ENCODE measurements at regions of chr20 and their contacts with region 1.

Region 1: GRCh38 chr20:36605399-36606157 is at the start of gene RAB5IF:
- DNase-seq: peak; percentile 99
- H3K4me3 ChIP-seq: peak within 1 kb of the TSS; percentile 70 to 100 (median 86)
- H3K27ac ChIP-seq: peak within 1 kb of the TSS; percentile 87 to 96 (median 90)
- H3K4me1 ChIP-seq: peaks cover 0 to 29% (median 25%) of the 10 kb centered on the region in 4 donors
- H3K27me3 ChIP-seq: no peaks in the 10 kb centered on the region
- CTCF ChIP-seq: peak; percentile 76 to 98 (median 94)
- EP300 ChIP-seq: peak in 2 of 4 donors; percentile 33 to 86
- POLR2A ChIP-seq: peak; percentile 18 to 25
- total RNA-seq, gene RAB5IF: 58.7 to 85.1 (median 75.7) TPM

Region 2: DNA sequence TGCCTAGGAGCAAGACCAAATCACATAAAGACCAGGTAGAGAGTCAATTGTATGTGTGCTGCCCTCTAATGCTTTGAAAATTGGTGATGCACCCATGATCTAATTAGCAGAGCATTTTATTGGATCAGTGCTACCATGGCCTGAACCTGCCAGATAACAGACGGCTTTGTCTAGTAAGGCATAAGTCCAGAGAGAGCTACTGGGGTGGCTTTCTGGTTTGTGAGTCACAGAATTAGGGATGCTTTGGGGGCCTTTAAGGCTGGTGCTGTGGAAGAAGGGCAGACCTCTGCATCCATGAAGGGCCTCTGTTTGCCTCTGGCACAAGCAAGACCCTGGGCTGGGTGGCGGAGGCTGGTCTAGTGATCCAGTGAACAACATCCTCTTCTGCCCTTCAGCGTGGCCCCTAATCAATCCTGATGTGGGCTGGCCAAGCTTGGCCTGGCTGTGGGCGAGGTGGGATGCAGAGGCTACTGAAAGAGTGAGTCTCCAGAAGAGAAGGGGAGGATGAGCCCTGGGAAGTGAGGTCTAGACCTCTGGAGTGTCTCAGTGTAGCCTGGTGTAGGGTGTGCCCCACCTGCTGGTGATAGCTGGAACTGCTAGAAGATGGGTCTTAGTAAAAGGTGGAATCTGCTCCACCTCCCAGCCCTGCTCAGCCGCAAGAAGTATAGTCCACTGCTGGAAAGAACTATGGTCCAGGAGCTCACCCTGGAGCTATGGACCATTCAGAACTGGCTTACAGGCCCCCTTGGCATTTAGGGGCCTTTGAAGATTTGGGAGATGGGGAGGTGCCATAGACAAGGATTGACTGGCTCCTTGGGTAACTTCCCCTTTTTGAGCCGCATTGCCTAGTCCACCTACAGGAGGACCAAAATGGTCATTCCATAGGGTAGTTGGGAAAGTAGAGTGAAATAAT is 406.0 kb before region 1 on chr20:
- intact Hi-C with region 1: loop called (anchors 10 kb)
- DNase-seq: peak; percentile 87
- H3K4me3 ChIP-seq: no peak overlapping the region
- H3K27ac ChIP-seq: no peak overlapping the region
- H3K4me1 ChIP-seq: no peaks in the 10 kb centered on the region
- H3K27me3 ChIP-seq: no peaks in the 10 kb centered on the region
- CTCF ChIP-seq: peak; percentile 68 to 92 (median 86)
- EP300 ChIP-seq: no peak
- POLR2A ChIP-seq: no peak

Region 3: GRCh38 chr20:36550797-36551299 is 54.7 kb before region 1 on chr20:
- intact Hi-C with region 1: loop called (anchors 1 kb)
- DNase-seq: peak; percentile 87
- H3K4me3 ChIP-seq: no peak overlapping the region
- H3K27ac ChIP-seq: peak overlapping the region; percentile 70 to 100 (median 99)
- H3K4me1 ChIP-seq: peaks cover 2 to 49% (median 28%) of the 10 kb centered on the region in 4 donors
- H3K27me3 ChIP-seq: no peaks in the 10 kb centered on the region
- CTCF ChIP-seq: no peak
- EP300 ChIP-seq: no peak
- POLR2A ChIP-seq: no peak

Region 4: DNA sequence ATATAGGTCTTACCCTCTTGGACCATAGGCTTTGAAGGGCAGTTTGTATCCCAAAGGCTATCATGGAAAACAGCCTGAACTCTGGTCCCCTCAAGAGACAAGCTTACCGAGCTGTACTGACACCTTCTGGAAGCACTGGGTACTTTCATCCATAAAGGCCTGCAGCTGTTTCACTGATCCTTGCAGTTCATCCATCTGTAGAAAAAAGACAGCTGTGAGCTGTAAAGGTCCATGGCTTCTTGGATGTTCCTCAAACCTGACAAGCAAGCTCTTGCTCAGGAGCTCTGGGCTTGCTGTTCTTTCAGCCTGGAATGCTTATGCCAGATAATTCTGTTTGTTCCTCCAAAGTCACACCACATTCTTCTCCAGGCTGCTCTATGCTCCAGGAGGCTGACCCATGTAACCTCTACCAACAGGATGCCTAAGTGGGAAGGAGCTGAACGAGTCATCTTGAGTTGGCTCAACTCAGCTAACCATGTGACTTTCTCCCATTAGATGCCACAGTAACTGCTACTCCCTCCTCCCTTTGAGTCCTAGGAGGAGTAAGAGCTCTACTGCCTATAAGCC is 149.2 kb after region 1 on chr20:
- intact Hi-C with region 1: loop called (anchors 5 kb)
- DNase-seq: peak; percentile 84
- H3K4me3 ChIP-seq: no peak overlapping the region
- H3K27ac ChIP-seq: peak overlapping the region; percentile 7 to 75 (median 64)
- H3K4me1 ChIP-seq: peaks cover 0 to 35% (median 13%) of the 10 kb centered on the region in 4 donors
- H3K27me3 ChIP-seq: no peaks in the 10 kb centered on the region
- CTCF ChIP-seq: peak; percentile 69 to 82 (median 79)
- EP300 ChIP-seq: no peak
- POLR2A ChIP-seq: no peak

Region 5: DNA sequence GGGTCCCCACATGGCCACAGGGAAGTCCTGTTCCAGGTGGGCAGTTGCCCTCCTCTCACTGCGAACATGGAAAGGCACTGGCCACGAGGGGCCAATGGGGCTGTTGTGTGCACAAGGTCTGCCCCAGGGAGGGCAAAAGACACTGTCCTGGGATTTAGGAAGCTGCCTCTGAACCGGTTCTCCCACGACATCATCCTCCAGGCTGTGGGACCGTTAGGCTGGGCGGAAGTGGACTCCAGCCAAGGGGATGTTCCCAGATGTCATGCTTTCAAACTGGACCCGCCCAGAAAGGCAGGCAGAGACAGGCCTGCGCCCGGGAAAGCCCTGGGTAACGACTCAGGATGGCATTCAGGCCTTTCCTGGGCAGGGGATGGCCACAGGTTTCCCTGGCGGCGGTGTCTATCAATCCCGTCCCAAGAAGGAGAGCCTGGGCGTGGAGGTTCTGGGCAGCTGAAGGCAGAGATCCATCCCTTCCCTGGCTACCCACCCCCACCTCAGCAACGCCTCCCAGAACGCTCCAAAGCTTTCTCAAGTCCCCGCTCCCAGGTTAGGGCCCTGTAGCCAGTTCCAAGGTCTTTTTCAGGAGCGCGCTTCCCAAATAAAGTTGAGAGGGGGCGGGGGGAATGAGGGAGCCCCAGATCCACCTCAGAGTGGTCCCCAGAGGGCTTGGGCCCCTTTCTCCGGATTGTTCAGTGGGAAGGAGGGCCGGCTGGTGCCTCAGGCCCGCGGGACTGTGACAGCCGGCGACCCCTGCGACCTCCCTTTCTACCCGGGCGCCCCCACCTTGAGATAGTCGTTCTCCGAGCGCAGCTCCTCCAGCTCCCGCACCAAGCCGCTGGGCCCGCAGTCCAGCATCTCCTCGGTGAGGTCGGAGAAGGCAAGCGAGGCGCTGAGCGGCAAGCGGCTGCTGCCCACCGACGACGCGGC is 256.6 kb after region 1 on chr20:
- intact Hi-C with region 1: loop called (anchors 5 kb)
- DNase-seq: peak; percentile 98
- H3K4me3 ChIP-seq: peak overlapping the region; percentile 65 to 82 (median 73)
- H3K27ac ChIP-seq: peak overlapping the region; percentile 96 to 99 (median 98)
- H3K4me1 ChIP-seq: peaks cover 0 to 59% (median 59%) of the 10 kb centered on the region in 4 donors
- H3K27me3 ChIP-seq: no peaks in the 10 kb centered on the region
- CTCF ChIP-seq: no peak
- EP300 ChIP-seq: peak in 1 of 4 donors; percentile 26
- POLR2A ChIP-seq: peak; percentile 71 to 87